Natural killer cell (primary cell): ENCODE measurements at regions of chr1 and their contacts with region 1.

Region 1: GRCh38 chr1:111755331-111756123 is at the start of gene DDX20:
- DNase-seq: peak; percentile 94 to 97
- ATAC-seq: peak; percentile 87 to 98 (median 91)
- H3K4me3 ChIP-seq: peak within 1 kb of the TSS; percentile 73
- H3K4me3 Mint-ChIP-seq: peak within 1 kb of the TSS; percentile 91
- H3K27ac ChIP-seq: peak within 1 kb of the TSS; percentile 91
- H3K27ac Mint-ChIP-seq: peak within 1 kb of the TSS; percentile 89 to 92
- H3K4me1 ChIP-seq: peaks cover 15% of the 10 kb centered on the region
- H3K4me1 Mint-ChIP-seq: peaks cover 24 to 39% of the 10 kb centered on the region in 2 donors
- H3K27me3 ChIP-seq: no peaks in the 10 kb centered on the region
- H3K27me3 Mint-ChIP-seq: no peaks in the 10 kb centered on the region
- CTCF ChIP-seq: peak; percentile 95
- total RNA-seq, gene DDX20: 17.5 to 21.8 (median 17.7) TPM

Region 2: GRCh38 chr1:110893908-110894490 is 861.5 kb before region 1 on chr1:
- intact Hi-C with region 1: loop called (anchors 10 kb)
- DNase-seq: peak in 1 of 2 donors; percentile 32
- ATAC-seq: peak in 2 of 3 donors; percentile 16 to 36
- H3K4me3 ChIP-seq: no peak overlapping the region
- H3K4me3 Mint-ChIP-seq: peak overlapping the region; percentile 4
- H3K27ac ChIP-seq: no peak overlapping the region
- H3K27ac Mint-ChIP-seq: peak overlapping the region; percentile 86 to 99
- H3K4me1 ChIP-seq: peaks cover 63% of the 10 kb centered on the region
- H3K4me1 Mint-ChIP-seq: peaks cover 91 to 96% of the 10 kb centered on the region in 2 donors
- H3K27me3 ChIP-seq: no peaks in the 10 kb centered on the region
- H3K27me3 Mint-ChIP-seq: no peaks in the 10 kb centered on the region
- CTCF ChIP-seq: peak; percentile 11

Region 3: GRCh38 chr1:111203681-111204200 is 551.8 kb before region 1 on chr1:
- intact Hi-C with region 1: loop called (anchors 10 kb)
- DNase-seq: peak; percentile 77 to 89
- ATAC-seq: peak; percentile 40 to 71 (median 70)
- H3K4me3 ChIP-seq: peak overlapping the region; percentile 52
- H3K4me3 Mint-ChIP-seq: peak overlapping the region; percentile 75
- H3K27ac ChIP-seq: peak overlapping the region; percentile 87
- H3K27ac Mint-ChIP-seq: peak overlapping the region; percentile 91 to 95
- H3K4me1 ChIP-seq: peaks cover 57% of the 10 kb centered on the region
- H3K4me1 Mint-ChIP-seq: peaks cover 65 to 69% of the 10 kb centered on the region in 2 donors
- H3K27me3 ChIP-seq: no peaks in the 10 kb centered on the region
- H3K27me3 Mint-ChIP-seq: no peaks in the 10 kb centered on the region
- CTCF ChIP-seq: no peak

Region 4: DNA sequence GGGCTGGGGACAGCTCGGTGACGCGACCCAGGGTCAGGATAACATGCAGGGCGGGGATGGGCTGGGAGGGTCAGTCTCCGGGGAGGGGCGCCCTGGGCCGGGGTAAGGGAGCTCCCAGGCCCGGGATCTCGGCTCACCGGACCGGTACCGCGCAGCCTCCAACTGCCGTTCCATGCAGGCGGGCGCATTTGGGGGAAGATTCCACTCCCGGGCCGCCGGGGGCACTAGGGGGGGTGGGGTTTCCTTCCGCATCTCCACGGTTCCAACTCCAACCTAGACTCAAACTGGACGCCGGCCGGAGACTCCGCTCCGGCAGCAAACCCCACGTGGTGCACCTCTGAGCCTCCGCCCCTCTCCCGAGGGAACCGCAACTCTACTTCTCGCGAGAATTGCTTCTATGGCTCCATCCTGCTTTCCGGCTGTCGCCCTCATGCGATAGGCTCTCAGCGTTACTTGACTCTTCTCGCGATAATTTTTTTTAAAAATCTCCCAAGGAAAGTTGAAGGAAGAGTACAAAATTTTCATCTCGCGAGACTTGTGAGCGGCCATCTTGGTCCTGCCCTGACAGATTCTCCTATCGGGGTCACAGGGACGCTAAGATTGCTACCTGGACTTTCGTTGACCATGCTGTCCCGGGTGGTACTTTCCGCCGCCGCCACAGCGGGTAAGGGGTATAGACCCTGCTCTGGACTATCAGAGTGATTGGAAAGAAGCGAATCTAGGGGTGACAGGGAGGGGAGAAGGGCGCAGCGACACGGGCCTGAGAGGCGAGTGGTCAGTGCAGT is 306.4 kb before region 1 on chr1 and contains the starts of genes ATP5PB and WDR77:
- intact Hi-C with region 1: loop called (anchors 1 kb)
- DNase-seq: peak; percentile 80 to 97
- ATAC-seq: peak; percentile 95 to 98 (median 97)
- H3K4me3 ChIP-seq: peak within 1 kb of the TSS; percentile 89
- H3K4me3 Mint-ChIP-seq: peak within 1 kb of the TSS; percentile 99
- H3K27ac ChIP-seq: peak within 1 kb of the TSS; percentile 73
- H3K27ac Mint-ChIP-seq: peak within 1 kb of the TSS; percentile 97 to 100
- H3K4me1 ChIP-seq: peaks cover 20% of the 10 kb centered on the region
- H3K4me1 Mint-ChIP-seq: peaks cover 72 to 75% of the 10 kb centered on the region in 2 donors
- H3K27me3 ChIP-seq: no peaks in the 10 kb centered on the region
- H3K27me3 Mint-ChIP-seq: no peaks in the 10 kb centered on the region
- CTCF ChIP-seq: no peak
- total RNA-seq, gene ATP5PB: 105 to 115 (median 105) TPM
- total RNA-seq, gene WDR77: 15.5 to 20.8 (median 17.8) TPM

Region 5: DNA sequence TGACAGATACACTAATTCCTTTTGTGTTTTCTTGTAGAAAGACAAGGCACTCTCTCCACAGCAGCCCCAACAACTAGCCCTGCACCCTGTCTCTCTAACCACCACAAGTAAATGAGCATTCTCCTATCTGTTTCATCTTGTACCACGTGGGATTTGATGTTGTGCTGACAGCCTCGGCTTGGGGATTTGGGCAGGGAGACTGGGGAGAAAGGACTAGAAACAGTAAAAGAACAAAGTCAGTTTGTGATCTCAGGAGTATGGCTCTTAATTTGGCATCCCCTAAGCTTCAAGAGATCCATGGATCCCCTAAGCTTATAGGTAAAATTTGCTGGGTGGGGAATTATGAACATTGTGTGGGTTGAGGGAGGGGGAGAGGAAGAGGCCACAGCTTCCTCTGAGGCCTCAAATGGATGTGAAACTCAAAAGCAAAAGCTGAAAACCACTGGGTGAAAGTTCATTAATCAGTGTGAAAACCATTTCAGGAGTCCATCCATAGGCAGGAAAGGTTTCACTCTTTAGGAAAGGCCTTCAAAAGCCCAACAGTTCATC is 278.7 kb before region 1 on chr1:
- intact Hi-C with region 1: loop called (anchors 10 kb)
- DNase-seq: peak in 1 of 2 donors; percentile 74
- ATAC-seq: peak; percentile 14 to 60 (median 52)
- H3K4me3 ChIP-seq: peak overlapping the region; percentile 60
- H3K4me3 Mint-ChIP-seq: peak overlapping the region; percentile 97
- H3K27ac ChIP-seq: peak overlapping the region; percentile 69
- H3K27ac Mint-ChIP-seq: no peak overlapping the region
- H3K4me1 ChIP-seq: peaks cover 45% of the 10 kb centered on the region
- H3K4me1 Mint-ChIP-seq: peaks cover 36 to 48% of the 10 kb centered on the region in 2 donors
- H3K27me3 ChIP-seq: no peaks in the 10 kb centered on the region
- H3K27me3 Mint-ChIP-seq: no peaks in the 10 kb centered on the region
- CTCF ChIP-seq: no peak

Region 6: DNA sequence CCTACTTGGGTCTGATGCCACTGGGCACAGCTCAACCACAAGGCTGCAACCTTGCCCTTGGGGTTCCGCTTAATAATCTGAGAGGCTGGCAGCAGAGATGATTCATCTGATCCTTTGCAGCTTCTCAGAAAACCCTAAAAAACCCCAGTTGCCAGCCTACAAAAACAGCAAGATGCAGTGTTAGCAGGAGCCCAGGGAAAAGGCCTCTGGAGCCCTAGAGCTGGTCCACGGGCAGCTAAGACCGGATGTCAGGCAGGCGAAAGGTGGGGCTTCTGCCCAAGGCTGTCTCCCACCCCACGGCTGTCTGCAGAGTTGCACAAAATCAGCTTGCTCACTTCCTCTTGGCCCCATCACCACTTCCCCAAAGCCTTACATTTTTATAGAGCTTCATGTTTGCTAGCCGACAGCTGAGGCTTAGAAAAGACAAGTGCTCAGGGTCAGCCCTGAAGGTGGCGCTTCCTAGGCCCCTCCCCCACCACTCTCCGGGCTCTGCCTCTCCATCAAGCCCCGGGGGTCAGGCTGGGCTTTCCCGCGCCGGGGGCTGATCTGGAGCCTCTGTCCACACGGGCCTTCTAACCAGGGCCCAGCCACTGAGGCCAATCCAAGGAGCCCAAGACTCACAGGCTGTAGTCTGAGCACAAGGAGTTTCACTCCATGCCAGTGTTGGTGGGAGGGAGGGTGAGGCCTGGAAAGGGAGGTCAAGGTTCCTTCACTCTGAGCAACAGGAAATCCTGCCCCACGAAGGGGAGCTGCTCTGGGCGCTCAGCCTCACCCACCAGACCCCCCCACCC is 247.9 kb before region 1 on chr1:
- intact Hi-C with region 1: loop called (anchors 1 kb)
- DNase-seq: peak; percentile 61 to 72
- ATAC-seq: peak; percentile 68 to 84 (median 72)
- H3K4me3 ChIP-seq: peak overlapping the region; percentile 26
- H3K4me3 Mint-ChIP-seq: peak overlapping the region; percentile 80
- H3K27ac ChIP-seq: peak overlapping the region; percentile 92
- H3K27ac Mint-ChIP-seq: peak overlapping the region in 1 of 2 donors; percentile 87
- H3K4me1 ChIP-seq: peaks cover 61% of the 10 kb centered on the region
- H3K4me1 Mint-ChIP-seq: peaks cover 23 to 44% of the 10 kb centered on the region in 2 donors
- H3K27me3 ChIP-seq: no peaks in the 10 kb centered on the region
- H3K27me3 Mint-ChIP-seq: no peaks in the 10 kb centered on the region
- CTCF ChIP-seq: no peak

Region 7: GRCh38 chr1:111720274-111720976 is 35.1 kb before region 1 on chr1:
- intact Hi-C with region 1: loop called (anchors 2 kb)
- DNase-seq: no peak
- ATAC-seq: peak in 1 of 3 donors; percentile 41
- H3K4me3 ChIP-seq: no peak overlapping the region
- H3K4me3 Mint-ChIP-seq: no peak overlapping the region
- H3K27ac ChIP-seq: no peak overlapping the region
- H3K27ac Mint-ChIP-seq: peak overlapping the region in 1 of 2 donors; percentile 37
- H3K4me1 ChIP-seq: no peaks in the 10 kb centered on the region
- H3K4me1 Mint-ChIP-seq: peaks cover 6 to 25% of the 10 kb centered on the region in 2 donors
- H3K27me3 ChIP-seq: no peaks in the 10 kb centered on the region
- H3K27me3 Mint-ChIP-seq: no peaks in the 10 kb centered on the region
- CTCF ChIP-seq: no peak

Region 8: GRCh38 chr1:112083487-112083886 is 328.0 kb after region 1 on chr1:
- intact Hi-C with region 1: no loop called
- DNase-seq: no peak
- ATAC-seq: no peak
- H3K4me3 ChIP-seq: no peak overlapping the region
- H3K4me3 Mint-ChIP-seq: no peak overlapping the region
- H3K27ac ChIP-seq: no peak overlapping the region
- H3K27ac Mint-ChIP-seq: no peak overlapping the region
- H3K4me1 ChIP-seq: no peaks in the 10 kb centered on the region
- H3K4me1 Mint-ChIP-seq: no peaks in the 10 kb centered on the region
- H3K27me3 ChIP-seq: no peaks in the 10 kb centered on the region
- H3K27me3 Mint-ChIP-seq: peaks cover 12 to 23% of the 10 kb centered on the region in 2 donors
- CTCF ChIP-seq: no peak